Right ventricle myocardium superior (tissue), 1 donor: ENCODE measurements at regions of chr2 and their contacts with region 1.

Region 1: DNA sequence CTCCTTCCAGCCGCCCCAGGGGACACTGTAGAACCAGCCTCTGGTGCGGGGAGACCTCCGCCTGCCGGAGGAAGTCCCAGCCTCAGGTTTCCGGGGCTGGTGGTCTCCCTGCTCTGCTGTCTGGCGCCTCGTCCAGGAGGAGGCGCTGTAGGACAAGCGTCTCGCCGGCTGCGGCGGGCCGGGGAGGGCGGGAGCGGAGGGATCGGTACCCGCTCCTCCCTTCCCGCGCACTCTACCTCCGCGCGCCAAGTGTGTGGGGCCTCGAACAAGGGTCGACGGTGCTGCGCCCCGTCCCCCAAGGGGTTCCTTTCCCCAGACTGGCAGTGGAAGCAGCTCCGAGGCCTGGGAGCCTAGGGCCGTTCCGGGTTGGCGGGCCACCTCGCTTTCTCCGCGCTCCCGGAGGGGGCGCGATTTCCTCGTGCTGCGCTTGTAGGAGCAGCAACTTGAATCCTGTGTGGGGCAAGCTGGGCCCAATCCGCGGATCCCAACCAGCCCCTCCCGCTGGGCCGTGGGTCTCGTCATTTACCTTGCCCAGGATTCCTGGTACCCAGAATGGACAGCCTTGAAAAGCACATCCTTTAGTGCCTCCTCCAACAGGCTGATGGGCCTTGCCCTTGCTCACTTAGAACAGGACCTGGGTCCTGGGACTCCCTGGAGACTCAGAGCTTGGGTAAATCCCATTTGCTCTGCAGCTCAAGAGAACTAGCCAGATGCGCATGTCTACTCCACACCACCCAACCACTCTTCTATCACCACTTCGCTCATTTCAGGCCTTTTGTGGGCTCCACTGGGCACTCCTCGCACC is 10.6 kb upstream of the HOXD4 start:
- DNase-seq: peak; percentile 77
- ATAC-seq: peak; percentile 97

Region 2: GRCh38 chr2:176106581-176107539 is 33.9 kb before region 1 on chr2 and contains the start of gene HOXD11:
- intact Hi-C with region 1: no loop called
- DNase-seq: no peak
- ATAC-seq: no peak
- total RNA-seq, gene HOXD11: not detected

Region 3: GRCh38 chr2:176454893-176455811 is 314.4 kb after region 1 on chr2:
- intact Hi-C with region 1: loop called (anchors 5 kb)
- DNase-seq: peak; percentile 89
- ATAC-seq: peak; percentile 78

Region 4: GRCh38 chr2:176554101-176555048 is 413.7 kb after region 1 on chr2:
- intact Hi-C with region 1: loop called (anchors 5 kb)
- DNase-seq: peak; percentile 40
- ATAC-seq: peak; percentile 86

Region 5: DNA sequence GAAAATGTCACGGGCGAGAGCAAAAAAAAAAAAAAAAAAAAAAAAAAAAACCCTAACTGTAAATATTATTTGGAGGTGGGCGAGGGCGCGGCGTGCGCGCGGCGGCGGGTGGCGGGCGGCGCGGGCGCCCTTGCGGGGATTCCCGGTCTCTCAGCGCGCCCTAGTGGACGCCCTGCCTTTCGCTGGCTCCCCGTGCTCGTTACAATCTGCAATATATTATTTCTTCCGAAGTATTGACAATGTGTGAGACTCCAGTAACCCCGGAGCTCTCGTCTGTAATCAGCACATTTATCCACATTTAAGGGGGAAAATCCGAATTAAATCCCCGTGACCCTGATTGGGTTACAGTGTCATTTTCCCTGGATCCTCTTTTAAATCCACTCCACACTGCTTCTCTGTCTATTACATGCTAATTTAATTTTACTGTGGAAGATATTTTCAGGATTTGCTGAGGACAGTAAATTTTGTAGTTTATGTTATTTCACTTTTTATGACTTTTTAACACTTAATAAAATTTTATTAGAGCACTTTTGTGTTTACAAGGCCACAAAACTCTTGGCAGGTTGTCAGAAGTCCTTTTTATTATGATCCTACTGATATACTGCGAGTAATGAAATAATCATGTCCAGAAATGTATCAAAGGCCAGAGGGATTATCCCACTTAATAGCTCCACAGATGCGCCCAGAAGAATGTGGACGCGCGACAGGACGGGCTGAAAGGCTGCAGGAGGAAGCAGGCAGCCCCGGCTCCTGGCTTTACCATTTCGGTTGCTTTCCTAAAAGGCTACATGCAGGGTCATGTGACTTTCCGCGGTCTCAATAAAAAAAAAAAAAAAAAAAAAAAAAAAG is 497.7 kb after region 1 on chr2:
- intact Hi-C with region 1: loop called (anchors 2 kb)
- DNase-seq: peak; percentile 76
- ATAC-seq: peak; percentile 98